ENCODE measurements at regions of chr14 and their contacts with region 1.

Region 1: GRCh38 chr14:49867831-49868723 is 15.5 kb upstream of the NEMF start:
- DNase-seq: peak; percentile 95
- H3K4me3 Mint-ChIP-seq: peak overlapping the region; percentile 96
- H3K27ac Mint-ChIP-seq: peak overlapping the region; percentile 99
- H3K4me1 Mint-ChIP-seq: peaks cover 11% of the 10 kb centered on the region
- H3K27me3 Mint-ChIP-seq: no peaks in the 10 kb centered on the region
- CTCF ChIP-seq: no peak

Region 2: GRCh38 chr14:49828640-49829039 is 39.4 kb before region 1 on chr14:
- CTCF ChIA-PET with region 1: no interaction called
- POLR2A ChIA-PET with region 1: no interaction called
- intact Hi-C with region 1: no loop called
- DNase-seq: no peak
- H3K4me3 Mint-ChIP-seq: no peak overlapping the region
- H3K27ac Mint-ChIP-seq: no peak overlapping the region
- H3K4me1 Mint-ChIP-seq: no peaks in the 10 kb centered on the region
- H3K27me3 Mint-ChIP-seq: no peaks in the 10 kb centered on the region
- CTCF ChIP-seq: no peak

Region 3: GRCh38 chr14:49908432-49908781 is 40.3 kb after region 1 on chr14:
- CTCF ChIA-PET with region 1: interaction called, 13 read pairs
- POLR2A ChIA-PET with region 1: interaction called, 6 read pairs
- intact Hi-C with region 1: no loop called
- DNase-seq: no peak
- H3K4me3 Mint-ChIP-seq: peak overlapping the region; percentile 51
- H3K27ac Mint-ChIP-seq: peak overlapping the region; percentile 97
- H3K4me1 Mint-ChIP-seq: peaks cover 25% of the 10 kb centered on the region
- H3K27me3 Mint-ChIP-seq: no peaks in the 10 kb centered on the region
- CTCF ChIP-seq: no peak

Region 4: GRCh38 chr14:50008562-50009350 is 140.7 kb after region 1 on chr14:
- CTCF ChIA-PET with region 1: interaction called, 33 read pairs
- POLR2A ChIA-PET with region 1: interaction called, 176 read pairs
- intact Hi-C with region 1: no loop called
- DNase-seq: peak; percentile 96
- H3K4me3 Mint-ChIP-seq: peak overlapping the region; percentile 69
- H3K27ac Mint-ChIP-seq: peak overlapping the region; percentile 96
- H3K4me1 Mint-ChIP-seq: peaks cover 29% of the 10 kb centered on the region
- H3K27me3 Mint-ChIP-seq: no peaks in the 10 kb centered on the region
- CTCF ChIP-seq: no peak

Region 5: GRCh38 chr14:50060871-50061663 is 193.0 kb after region 1 on chr14:
- CTCF ChIA-PET with region 1: interaction called, 52 read pairs
- POLR2A ChIA-PET with region 1: interaction called, 31 read pairs
- intact Hi-C with region 1: loop called (anchors 5 kb)
- DNase-seq: peak; percentile 96
- H3K4me3 Mint-ChIP-seq: no peak overlapping the region
- H3K27ac Mint-ChIP-seq: peak overlapping the region; percentile 84
- H3K4me1 Mint-ChIP-seq: peaks cover 20% of the 10 kb centered on the region
- H3K27me3 Mint-ChIP-seq: no peaks in the 10 kb centered on the region
- CTCF ChIP-seq: no peak

Region 6: GRCh38 chr14:50116181-50116956 is 248.3 kb after region 1 on chr14 and contains the start of gene VCPKMT:
- CTCF ChIA-PET with region 1: interaction called, 19 read pairs
- POLR2A ChIA-PET with region 1: interaction called, 47 read pairs
- intact Hi-C with region 1: no loop called
- DNase-seq: peak; percentile 90
- H3K4me3 Mint-ChIP-seq: peak within 1 kb of the TSS; percentile 93
- H3K27ac Mint-ChIP-seq: peak within 1 kb of the TSS; percentile 99
- H3K4me1 Mint-ChIP-seq: no peaks in the 10 kb centered on the region
- H3K27me3 Mint-ChIP-seq: no peaks in the 10 kb centered on the region
- CTCF ChIP-seq: no peak
- total RNA-seq, gene VCPKMT: 7.2 and 10.4 TPM in 2 replicates

Measured in MCF 10A (cell line).